Dendritic cell treated with granulocyte-macrophage colony-stimulating factor and Interleukin-4, amounts not matched to agents 40 ng/mL and 50 ng/mL, for 4 days (primary cell): ENCODE measurements at regions of chr9 and their contacts with region 1.

Region 1: GRCh38 chr9:37800631-37801286 is at the start of gene DCAF10:
- H3K4me3 Mint-ChIP-seq: peak within 1 kb of the TSS; percentile 81
- H3K27ac Mint-ChIP-seq: peak within 1 kb of the TSS; percentile 83
- H3K4me1 Mint-ChIP-seq: peaks cover 37% of the 10 kb centered on the region
- H3K27me3 Mint-ChIP-seq: no peaks in the 10 kb centered on the region

Region 2: GRCh38 chr9:37592108-37592951 is 208.4 kb before region 1 on chr9 and contains the start of gene TOMM5:
- intact Hi-C with region 1: loop called (anchors 10 kb)
- H3K4me3 Mint-ChIP-seq: peak within 1 kb of the TSS; percentile 99
- H3K27ac Mint-ChIP-seq: peak within 1 kb of the TSS; percentile 95
- H3K4me1 Mint-ChIP-seq: peaks cover 27% of the 10 kb centered on the region
- H3K27me3 Mint-ChIP-seq: peaks cover 8% of the 10 kb centered on the region

Region 3: GRCh38 chr9:37753489-37754190 is 47.1 kb before region 1 on chr9 and contains the start of gene TRMT10B:
- intact Hi-C with region 1: loop called (anchors 1 kb)
- H3K4me3 Mint-ChIP-seq: peak within 1 kb of the TSS; percentile 95
- H3K27ac Mint-ChIP-seq: peak within 1 kb of the TSS; percentile 94
- H3K4me1 Mint-ChIP-seq: peaks cover 18% of the 10 kb centered on the region
- H3K27me3 Mint-ChIP-seq: no peaks in the 10 kb centered on the region

Region 4: DNA sequence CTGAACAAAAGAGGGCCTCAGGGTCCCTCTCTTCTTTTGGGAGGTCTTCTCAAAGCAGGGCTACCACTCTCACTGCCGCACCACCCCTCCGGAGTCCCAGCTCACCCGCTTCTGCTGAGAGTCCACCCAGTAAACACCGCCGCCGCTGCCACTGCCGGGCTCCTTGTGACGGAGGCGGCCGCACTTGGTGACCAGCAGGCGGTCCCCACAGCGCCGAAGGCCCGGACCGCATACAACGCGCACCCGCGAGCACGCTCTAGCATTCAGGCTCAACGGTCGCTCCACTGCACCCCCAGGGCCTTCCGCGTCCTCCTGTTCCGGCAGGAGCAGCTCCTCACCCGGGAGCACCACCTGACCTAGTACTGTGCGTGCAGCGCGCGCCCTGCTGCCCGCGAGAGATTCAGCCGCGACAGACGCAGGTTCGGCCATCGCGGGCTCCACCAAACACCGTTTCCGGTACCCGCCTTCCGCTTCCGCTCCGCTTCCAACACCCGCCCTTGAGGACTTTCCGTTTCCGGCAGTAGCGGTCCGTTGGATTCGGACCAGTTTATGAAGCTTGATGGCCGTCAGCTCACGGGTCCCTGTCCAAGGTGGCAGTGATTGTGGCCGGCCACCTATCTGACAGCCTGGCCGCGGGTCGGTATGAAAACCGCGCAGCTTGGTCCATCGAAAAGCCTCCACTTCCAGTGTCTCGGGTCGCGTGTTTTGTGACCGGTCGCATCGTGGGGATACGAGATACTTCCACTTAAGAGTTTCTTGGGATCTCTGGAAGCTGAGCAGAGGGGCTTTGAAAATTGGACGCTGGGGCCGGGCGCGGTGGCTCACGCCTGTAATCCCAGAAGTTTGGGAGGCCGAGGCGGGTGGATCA is 15.9 kb before region 1 on chr9 and contains the start of gene EXOSC3:
- intact Hi-C with region 1: loop called (anchors 1 kb)
- H3K4me3 Mint-ChIP-seq: peak within 1 kb of the TSS; percentile 100
- H3K27ac Mint-ChIP-seq: peak within 1 kb of the TSS; percentile 98
- H3K4me1 Mint-ChIP-seq: peaks cover 21% of the 10 kb centered on the region
- H3K27me3 Mint-ChIP-seq: peaks cover 5% of the 10 kb centered on the region